ENCODE measurements at regions of chr2 and their contacts with region 1.

Region 1: GRCh38 chr2:24409700-24410556 is 49.6 kb upstream of the ITSN2 start:
- DNase-seq: no peak
- H3K4me3 ChIP-seq: no peak overlapping the region
- H3K27ac ChIP-seq: no peak overlapping the region
- H3K4me1 ChIP-seq: peaks cover 0 to 2% (median 0%) of the 10 kb centered on the region in 4 donors
- H3K27me3 ChIP-seq: no peaks in the 10 kb centered on the region
- CTCF ChIP-seq: peak; percentile 60 to 82 (median 78)
- EP300 ChIP-seq: no peak
- POLR2A ChIP-seq: no peak

Region 2: GRCh38 chr2:24482251-24482971 is 72.5 kb after region 1 on chr2:
- intact Hi-C with region 1: no loop called
- DNase-seq: no peak
- H3K4me3 ChIP-seq: no peak overlapping the region
- H3K27ac ChIP-seq: no peak overlapping the region
- H3K4me1 ChIP-seq: no peaks in the 10 kb centered on the region
- H3K27me3 ChIP-seq: no peaks in the 10 kb centered on the region
- CTCF ChIP-seq: no peak
- EP300 ChIP-seq: no peak
- POLR2A ChIP-seq: no peak

Region 3: GRCh38 chr2:24827321-24828237 is 417.7 kb after region 1 on chr2:
- intact Hi-C with region 1: loop called (anchors 1 kb)
- DNase-seq: peak; percentile 91
- H3K4me3 ChIP-seq: no peak overlapping the region
- H3K27ac ChIP-seq: no peak overlapping the region
- H3K4me1 ChIP-seq: peaks cover 0 to 10% (median 8%) of the 10 kb centered on the region in 4 donors
- H3K27me3 ChIP-seq: no peaks in the 10 kb centered on the region
- CTCF ChIP-seq: peak; percentile 72 to 90 (median 85)
- EP300 ChIP-seq: no peak
- POLR2A ChIP-seq: no peak

Measured in sigmoid colon (tissue), 7 donors.